Dorsolateral prefrontal cortex (tissue), 120 donors: ENCODE measurements at regions of chr7 and their contacts with region 1.

Region 1: DNA sequence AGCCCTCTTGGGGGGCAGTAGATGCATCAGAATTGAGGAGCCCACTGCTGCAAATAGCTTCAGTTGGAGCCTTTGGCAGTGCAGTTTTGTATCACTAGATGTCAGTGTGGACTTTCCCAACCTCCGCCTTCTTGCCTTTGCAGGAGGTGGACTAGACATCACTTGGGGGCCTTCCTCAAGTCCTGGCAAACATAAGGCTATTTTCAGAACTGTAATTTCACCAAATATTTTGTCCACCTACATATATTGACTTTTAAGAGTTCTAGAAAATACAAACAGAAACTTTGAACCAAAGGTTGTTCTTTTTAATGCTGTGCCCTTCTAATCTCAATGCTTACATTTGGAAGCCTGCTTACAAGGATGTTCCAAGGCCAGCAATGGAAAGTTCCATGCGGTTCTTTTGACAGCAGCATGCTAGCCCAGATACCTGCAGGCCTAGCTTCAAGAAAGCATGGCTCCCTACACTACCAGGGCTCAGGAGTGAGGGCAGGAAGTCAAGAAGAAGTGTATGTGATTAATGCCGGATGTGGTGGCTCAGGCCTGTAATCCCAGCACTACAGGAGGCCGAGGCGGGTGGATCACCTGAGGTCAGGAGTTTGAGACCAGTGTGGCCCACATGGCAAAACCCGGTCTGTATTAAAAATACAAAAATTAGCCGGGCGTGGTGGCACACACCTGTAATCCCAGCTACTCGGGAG is 8.0 kb upstream of the ZNRF2 start:
- DNase-seq: peak in 7 of 10 donors; percentile 34 to 70 (median 52)
- H3K4me3 ChIP-seq: no peak overlapping the region
- H3K27ac ChIP-seq: peak overlapping the region in 20 of 59 donors; percentile 0 to 69 (median 31)
- H3K27me3 ChIP-seq: no peaks in the 10 kb centered on the region
- CTCF ChIP-seq: peak in 55 of 56 donors; percentile 47 to 87 (median 74)

Region 2: GRCh38 chr7:30412810-30413504 is 136.6 kb after region 1 on chr7:
- intact Hi-C with region 1: loop called (anchors 2 to 5 kb)
- DNase-seq: peak in 1 of 10 donors; percentile 18
- H3K4me3 ChIP-seq: no peak overlapping the region
- H3K27ac ChIP-seq: peak overlapping the region in 10 of 59 donors; percentile 8 to 46 (median 28)
- H3K27me3 ChIP-seq: no peaks in the 10 kb centered on the region
- CTCF ChIP-seq: peak; percentile 44 to 80 (median 66)

Region 3: GRCh38 chr7:30740424-30741181 is 464.3 kb after region 1 on chr7:
- intact Hi-C with region 1: loop called in 1 of 2 experiments (anchors 10 kb)
- DNase-seq: peak in 9 of 10 donors; percentile 68 to 86 (median 73)
- H3K4me3 ChIP-seq: no peak overlapping the region
- H3K27ac ChIP-seq: no peak overlapping the region
- H3K27me3 ChIP-seq: no peaks in the 10 kb centered on the region
- CTCF ChIP-seq: peak; percentile 75 to 99 (median 95)